H1 (cell line): ENCODE measurements at regions of chr10 and their contacts with region 1.

Region 1: DNA sequence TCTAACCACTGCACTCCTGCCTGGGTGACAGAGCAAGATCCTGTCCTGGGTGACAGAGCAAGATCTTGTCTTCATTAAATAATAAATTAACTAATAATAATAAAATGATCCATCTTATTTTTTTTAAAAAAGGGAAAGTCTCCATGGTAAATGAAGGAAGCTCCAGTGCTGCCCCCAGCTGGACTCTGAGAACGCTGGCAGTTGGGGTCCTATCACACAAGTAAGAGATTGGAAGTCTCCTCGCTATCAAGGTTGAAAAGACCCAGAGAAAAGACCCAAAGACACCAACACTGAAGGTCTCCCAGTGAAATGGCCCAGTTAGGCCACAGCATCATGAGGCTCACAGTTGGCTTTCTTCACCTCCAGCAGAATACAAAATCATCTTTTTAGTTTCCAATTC is 13.8 kb upstream of the C10orf67 start:
- DNase-seq: no peak
- H3K4me3 ChIP-seq: no peak overlapping the region
- H3K27ac ChIP-seq: no peak overlapping the region
- H3K4me1 ChIP-seq: no peaks in the 10 kb centered on the region
- H3K27me3 ChIP-seq: no peaks in the 10 kb centered on the region
- CTCF ChIP-seq: peak; percentile 25 to 39 (median 34)
- EP300 ChIP-seq: no peak
- POLR2A ChIP-seq: no peak
- RAD21 ChIP-seq: peak; percentile 34 to 47; a peak in 3 of 4 replicates

Region 2: GRCh38 chr10:23338178-23338828 is 20.1 kb before region 1 on chr10:
- CTCF ChIA-PET with region 1: interaction called, 10 read pairs
- POLR2A ChIA-PET with region 1: no interaction called
- DNase-seq: no peak
- H3K4me3 ChIP-seq: no peak overlapping the region
- H3K27ac ChIP-seq: no peak overlapping the region
- H3K4me1 ChIP-seq: peaks cover 2 to 4% (median 3%) of the 10 kb centered on the region in 4 experiments; a peak in 4 of 7 replicates
- H3K27me3 ChIP-seq: peaks cover 2 to 11% (median 4%) of the 10 kb centered on the region in 4 experiments; a peak in 5 of 7 replicates
- CTCF ChIP-seq: peak; percentile 45 to 65 (median 56)
- EP300 ChIP-seq: no peak
- POLR2A ChIP-seq: no peak
- RAD21 ChIP-seq: peak; percentile 41 to 64

Region 3: GRCh38 chr10:23344241-23344841 is 14.0 kb before region 1 on chr10 and contains the start of gene C10orf67:
- CTCF ChIA-PET with region 1: interaction called, 17 read pairs
- POLR2A ChIA-PET with region 1: no interaction called
- DNase-seq: peak; percentile 17 to 70
- H3K4me3 ChIP-seq: peak within 1 kb of the TSS; percentile 65 to 98 (median 79)
- H3K27ac ChIP-seq: no peak within 1 kb of the TSS
- H3K4me1 ChIP-seq: peaks cover 2 to 9% (median 4%) of the 10 kb centered on the region in 4 experiments; a peak in 4 of 7 replicates
- H3K27me3 ChIP-seq: peaks cover 3 to 15% (median 6%) of the 10 kb centered on the region in 4 experiments; a peak in 5 of 7 replicates
- CTCF ChIP-seq: no peak
- EP300 ChIP-seq: no peak
- POLR2A ChIP-seq: no peak
- RAD21 ChIP-seq: no peak
- total RNA-seq, gene C10orf67: 0.11 TPM in 1 of 2 replicates, not detected in the other

Region 4: GRCh38 chr10:23408330-23408976 is 50.1 kb after region 1 on chr10:
- CTCF ChIA-PET with region 1: no interaction called
- POLR2A ChIA-PET with region 1: no interaction called
- DNase-seq: no peak
- H3K4me3 ChIP-seq: no peak overlapping the region
- H3K27ac ChIP-seq: no peak overlapping the region
- H3K4me1 ChIP-seq: peaks cover 0 to 3% (median 2%) of the 10 kb centered on the region in 4 experiments; a peak in 3 of 7 replicates
- H3K27me3 ChIP-seq: no peaks in the 10 kb centered on the region
- CTCF ChIP-seq: no peak
- EP300 ChIP-seq: no peak
- POLR2A ChIP-seq: no peak
- RAD21 ChIP-seq: no peak

Region 5: DNA sequence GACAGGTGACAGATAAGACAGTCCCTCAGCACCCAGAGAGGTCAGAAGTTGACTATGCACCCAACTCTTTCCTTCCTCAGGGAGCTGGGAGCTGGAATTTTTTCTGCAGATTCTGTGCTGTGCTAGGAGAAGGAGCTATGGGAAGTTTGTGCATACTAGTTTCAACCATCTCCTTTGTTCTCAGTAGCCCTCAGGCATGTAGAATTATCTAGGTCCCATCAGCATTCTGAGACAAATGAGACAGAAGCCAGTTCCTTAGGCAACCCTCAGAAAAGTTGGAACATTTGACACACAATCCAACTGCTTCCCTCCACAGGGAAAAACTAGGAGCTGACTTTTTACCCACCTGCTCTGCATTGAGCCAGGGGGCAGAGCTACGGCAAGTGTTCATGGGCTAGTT is 710.4 kb after region 1 on chr10:
- CTCF ChIA-PET with region 1: no interaction called
- POLR2A ChIA-PET with region 1: no interaction called
- DNase-seq: no peak
- H3K4me3 ChIP-seq: no peak overlapping the region
- H3K27ac ChIP-seq: no peak overlapping the region
- H3K4me1 ChIP-seq: no peaks in the 10 kb centered on the region
- H3K27me3 ChIP-seq: no peaks in the 10 kb centered on the region
- CTCF ChIP-seq: no peak
- EP300 ChIP-seq: no peak
- POLR2A ChIP-seq: no peak
- RAD21 ChIP-seq: no peak